Right ventricle myocardium superior (tissue), 1 donor: ENCODE measurements at regions of chr2 and their contacts with region 1.

Region 1: GRCh38 chr2:44981136-44982108 is 27.8 kb downstream of the SIX2 start:
- DNase-seq: peak; percentile 78
- ATAC-seq: peak; percentile 89

Region 2: GRCh38 chr2:45494269-45494977 is 513.0 kb after region 1 on chr2:
- intact Hi-C with region 1: loop called (anchors 2 kb)
- DNase-seq: no peak
- ATAC-seq: no peak